Activated CD4-positive, alpha-beta T cell treated with anti-CD3 and anti-CD28 coated beads for 36 hours (primary cell): ENCODE measurements at regions of chr5 and their contacts with region 1.

Region 1: GRCh38 chr5:180126726-180127681 is 55.4 kb upstream of the RNF130 start:
- DNase-seq: peak; percentile 66
- ATAC-seq: peak; percentile 85
- H3K4me3 Mint-ChIP-seq: no peak overlapping the region
- H3K27ac Mint-ChIP-seq: no peak overlapping the region
- H3K4me1 Mint-ChIP-seq: no peaks in the 10 kb centered on the region
- H3K27me3 Mint-ChIP-seq: peaks cover 14% of the 10 kb centered on the region

Region 2: DNA sequence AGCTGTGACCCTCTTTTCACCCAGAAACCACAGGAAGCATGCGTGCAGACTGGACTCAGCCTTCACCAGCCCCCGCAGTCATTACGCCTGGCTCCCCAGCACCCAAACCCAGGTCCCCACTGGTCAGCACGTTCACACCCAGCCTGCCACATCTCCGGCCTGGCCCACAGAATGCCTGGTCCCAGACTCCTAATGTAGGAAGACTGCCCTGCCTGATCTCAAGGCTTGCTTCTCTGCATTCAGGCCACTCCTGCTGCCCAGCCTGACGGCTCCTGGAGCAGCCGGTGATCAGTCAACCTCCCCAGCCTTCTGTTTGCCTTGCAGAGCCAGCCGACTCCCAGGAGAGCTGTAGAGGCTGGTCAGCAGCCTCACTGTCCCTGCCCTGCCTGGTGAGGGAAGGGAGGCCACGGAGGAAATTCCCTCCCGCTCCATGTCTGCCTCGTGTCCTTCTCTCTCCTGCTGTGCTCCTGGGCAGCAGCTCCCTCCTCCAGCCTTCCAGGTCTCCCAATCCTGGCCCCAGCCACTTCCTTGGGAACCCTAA is 807.2 kb before region 1 on chr5:
- CTCF ChIA-PET with region 1: no interaction called
- POLR2A ChIA-PET with region 1: no interaction called
- intact Hi-C with region 1: no loop called
- DNase-seq: no peak
- ATAC-seq: no peak
- H3K4me3 Mint-ChIP-seq: no peak overlapping the region
- H3K27ac Mint-ChIP-seq: no peak overlapping the region
- H3K4me1 Mint-ChIP-seq: no peaks in the 10 kb centered on the region
- H3K27me3 Mint-ChIP-seq: no peaks in the 10 kb centered on the region

Region 3: DNA sequence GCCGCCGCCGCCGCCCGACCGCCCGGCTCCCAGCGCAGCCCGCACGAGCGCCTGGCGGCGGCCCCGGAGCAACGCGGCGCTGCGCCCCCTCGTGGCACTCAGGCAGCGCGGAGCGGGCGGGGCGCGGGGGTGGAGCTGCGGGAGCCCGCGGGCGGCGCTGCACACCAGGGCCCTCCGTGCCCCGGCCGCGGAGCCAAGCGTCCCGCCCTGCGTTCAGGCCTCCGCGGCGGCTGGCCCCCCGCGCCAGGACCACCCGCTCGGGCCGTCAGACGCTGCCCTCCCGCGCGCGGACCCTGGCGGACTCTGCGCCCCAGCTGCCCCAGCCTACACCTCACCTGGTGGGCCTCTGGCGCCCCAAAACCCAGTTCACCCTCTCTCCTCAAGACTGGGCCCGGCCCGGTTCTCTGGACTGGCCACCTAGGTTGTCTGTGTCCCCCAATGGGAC is 82.2 kb after region 1 on chr5 and contains the start of gene RASGEF1C:
- CTCF ChIA-PET with region 1: interaction called, 15 read pairs
- POLR2A ChIA-PET with region 1: no interaction called
- intact Hi-C with region 1: loop called (anchors 1 kb)
- DNase-seq: peak; percentile 82
- ATAC-seq: peak; percentile 98
- H3K4me3 Mint-ChIP-seq: peak within 1 kb of the TSS; percentile 25
- H3K27ac Mint-ChIP-seq: no peak within 1 kb of the TSS
- H3K4me1 Mint-ChIP-seq: peaks cover 8% of the 10 kb centered on the region
- H3K27me3 Mint-ChIP-seq: peaks cover 37% of the 10 kb centered on the region
- total RNA-seq, gene RASGEF1C: not detected

Region 4: DNA sequence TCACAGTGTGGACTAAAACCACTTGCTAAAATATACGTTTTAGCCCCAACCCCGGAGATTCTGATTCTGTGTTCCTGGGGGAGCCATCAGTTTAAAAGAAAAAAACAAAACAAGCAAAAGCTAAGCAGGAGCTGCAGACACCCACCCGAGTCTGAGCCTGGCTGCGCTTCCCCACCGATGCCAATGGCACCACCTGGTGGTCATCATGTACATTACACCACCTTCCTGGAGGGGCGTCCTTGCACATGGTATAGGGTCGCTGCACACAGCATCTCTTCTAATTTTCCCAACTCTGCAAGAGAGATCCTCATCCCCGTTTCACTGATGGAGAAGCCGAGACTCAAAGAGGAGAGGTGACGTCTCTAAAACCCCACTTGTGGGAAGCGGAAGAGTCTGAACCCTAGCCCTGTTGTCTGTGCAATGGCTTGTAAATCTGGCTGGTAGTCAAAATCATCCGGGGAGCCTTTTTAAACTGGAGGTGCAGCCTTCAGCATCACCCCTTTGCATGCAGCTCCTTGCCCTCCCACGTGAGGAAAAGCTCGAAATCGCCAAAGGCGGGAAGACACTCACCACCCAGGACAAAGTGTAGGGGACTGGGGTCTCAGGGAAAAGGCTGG is 344.1 kb after region 1 on chr5:
- CTCF ChIA-PET with region 1: interaction called, 5 read pairs
- POLR2A ChIA-PET with region 1: no interaction called
- intact Hi-C with region 1: loop called in 1 of 2 experiments (anchors 5 kb)
- DNase-seq: peak; percentile 70
- ATAC-seq: peak; percentile 82
- H3K4me3 Mint-ChIP-seq: no peak overlapping the region
- H3K27ac Mint-ChIP-seq: no peak overlapping the region
- H3K4me1 Mint-ChIP-seq: no peaks in the 10 kb centered on the region
- H3K27me3 Mint-ChIP-seq: peaks cover 4% of the 10 kb centered on the region